A549 (cell line): ENCODE measurements at regions of chr20 and their contacts with region 1.

Region 1: GRCh38 chr20:63495741-63496595 is 2.9 kb downstream of the EEF1A2 start:
- DNase-seq: peak; percentile 58 to 73
- ATAC-seq: peak in 1 of 2 experiments; percentile 79; a peak in 3 of 6 replicates
- H3K4me3 ChIP-seq: no peak overlapping the region
- H3K27ac ChIP-seq: peak overlapping the region in 1 of 2 experiments; percentile 55; a peak in 3 of 6 replicates
- H3K4me1 ChIP-seq: peaks cover 27% of the 10 kb centered on the region
- CTCF ChIP-seq: peak; percentile 90
- EP300 ChIP-seq: no peak
- POLR2A ChIP-seq: no peak
- RAD21 ChIP-seq: peak; percentile 52 to 63

Region 2: DNA sequence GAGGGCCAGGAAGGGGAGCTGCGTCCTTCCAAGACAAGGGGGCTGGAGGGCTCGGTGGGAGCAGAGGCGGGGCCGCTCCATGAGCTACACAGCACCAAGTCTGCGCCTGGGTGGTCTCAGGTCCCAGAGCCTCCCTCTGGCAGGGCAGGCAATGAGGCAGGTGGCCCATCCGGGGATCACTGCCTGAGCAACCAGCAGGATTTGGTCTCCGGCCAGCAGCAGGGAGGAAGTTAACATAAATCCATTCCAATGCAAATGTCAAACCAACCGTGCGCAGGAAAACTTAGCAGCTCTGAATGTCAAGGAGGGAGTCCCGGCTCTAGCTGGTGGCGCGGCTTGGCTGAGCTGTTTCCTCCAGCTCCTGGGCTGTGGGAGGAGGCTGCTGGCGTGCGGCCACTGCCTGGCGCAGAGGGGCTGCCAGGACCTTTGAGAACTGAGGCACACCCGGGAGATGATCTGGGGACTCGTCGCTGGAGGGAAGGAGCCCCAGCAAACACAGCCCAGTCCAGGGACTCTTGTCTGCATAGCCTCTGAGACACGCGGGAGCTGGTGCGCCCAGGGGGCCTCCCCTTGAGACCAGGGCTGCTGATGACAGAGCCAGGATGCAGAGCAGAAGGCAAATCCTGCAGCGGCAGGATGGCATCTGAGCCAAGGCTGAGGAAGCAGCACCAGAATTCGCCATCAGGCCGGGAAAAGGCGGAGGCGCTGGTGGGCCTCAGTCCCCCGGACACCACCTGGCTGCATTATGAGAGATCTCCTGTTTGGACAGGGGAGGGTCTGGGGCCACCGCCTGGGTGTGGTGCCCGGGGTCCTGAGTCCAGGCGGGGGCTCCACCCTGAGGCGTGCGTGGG is 101.7 kb before region 1 on chr20:
- CTCF ChIA-PET with region 1: no interaction called
- POLR2A ChIA-PET with region 1: no interaction called
- DNase-seq: no peak
- ATAC-seq: no peak
- H3K4me3 ChIP-seq: no peak overlapping the region
- H3K27ac ChIP-seq: no peak overlapping the region
- H3K4me1 ChIP-seq: no peaks in the 10 kb centered on the region
- CTCF ChIP-seq: no peak
- EP300 ChIP-seq: no peak
- POLR2A ChIP-seq: no peak
- RAD21 ChIP-seq: no peak

Region 3: DNA sequence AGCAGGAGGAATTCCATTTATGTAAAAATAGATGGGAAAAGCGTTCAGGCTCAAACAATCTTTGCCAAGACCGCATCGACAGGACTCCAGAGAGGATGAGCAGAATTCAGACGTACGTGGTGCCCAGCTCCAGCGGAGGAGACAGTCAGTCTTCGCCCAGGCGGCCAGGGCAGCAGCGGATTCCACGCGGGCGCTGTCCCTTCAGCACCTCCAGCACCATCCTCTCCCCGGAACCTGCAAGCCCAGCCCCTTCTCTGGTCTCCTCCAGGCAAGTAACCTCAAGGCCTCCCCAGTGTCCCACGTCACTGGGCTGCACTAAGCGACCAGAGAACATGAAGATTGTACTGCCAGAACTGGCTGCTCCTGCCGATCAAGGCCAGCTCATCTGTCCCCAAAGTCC is 20.8 kb before region 1 on chr20:
- CTCF ChIA-PET with region 1: interaction called, 40 read pairs
- POLR2A ChIA-PET with region 1: no interaction called
- DNase-seq: peak in 1 of 2 experiments; percentile 52
- ATAC-seq: peak; percentile 51 to 61; a peak in 5 of 6 replicates
- H3K4me3 ChIP-seq: no peak overlapping the region
- H3K27ac ChIP-seq: no peak overlapping the region
- H3K4me1 ChIP-seq: peaks cover 13% of the 10 kb centered on the region
- CTCF ChIP-seq: no peak
- EP300 ChIP-seq: no peak
- POLR2A ChIP-seq: no peak
- RAD21 ChIP-seq: no peak

Region 4: GRCh38 chr20:63482856-63483695 is 12.9 kb before region 1 on chr20:
- CTCF ChIA-PET with region 1: interaction called, 40 read pairs
- POLR2A ChIA-PET with region 1: no interaction called
- DNase-seq: peak; percentile 53 to 64
- ATAC-seq: peak; percentile 17 to 57
- H3K4me3 ChIP-seq: no peak overlapping the region
- H3K27ac ChIP-seq: peak overlapping the region in 1 of 2 experiments; percentile 37; a peak in 1 of 6 replicates
- H3K4me1 ChIP-seq: peaks cover 16% of the 10 kb centered on the region; the same call in 2 of the 3 replicates
- CTCF ChIP-seq: no peak
- EP300 ChIP-seq: no peak
- POLR2A ChIP-seq: no peak
- RAD21 ChIP-seq: no peak

Region 5: DNA sequence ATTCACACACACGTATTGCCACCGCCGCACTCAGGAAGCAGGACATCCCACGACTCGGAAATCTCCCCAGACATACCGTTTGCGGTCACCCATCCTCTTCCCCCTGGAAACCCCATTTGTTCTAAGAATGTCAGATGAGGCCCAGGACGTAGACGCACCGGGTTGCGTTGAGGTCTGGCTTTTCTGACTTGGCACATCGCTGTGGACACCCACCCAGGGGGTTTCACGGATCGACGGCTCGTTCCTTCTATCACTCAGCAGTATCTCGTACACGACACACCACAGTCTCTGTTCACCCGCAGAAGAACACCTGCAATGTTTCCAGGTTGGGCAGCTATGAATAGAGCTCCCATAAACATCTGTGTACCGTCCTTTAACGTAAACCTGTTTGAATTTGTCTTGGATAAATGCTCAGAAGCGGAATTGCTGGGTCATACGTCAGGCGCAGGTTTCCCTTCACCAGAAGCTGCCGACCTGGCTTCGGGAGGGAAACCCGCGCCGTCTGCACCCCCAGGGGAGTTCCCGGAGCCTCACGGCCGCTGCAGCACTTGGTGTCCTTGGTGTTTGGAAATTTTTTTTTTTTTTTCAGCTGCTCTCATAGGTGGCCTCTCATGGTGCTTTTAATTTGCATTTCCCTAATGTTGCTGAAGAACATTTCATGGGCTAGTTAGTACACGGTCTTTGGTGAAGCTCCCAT is 12.3 kb after region 1 on chr20:
- CTCF ChIA-PET with region 1: interaction called, 20 read pairs
- POLR2A ChIA-PET with region 1: no interaction called
- DNase-seq: no peak
- ATAC-seq: no peak
- H3K4me3 ChIP-seq: no peak overlapping the region
- H3K27ac ChIP-seq: no peak overlapping the region
- H3K4me1 ChIP-seq: no peaks in the 10 kb centered on the region
- CTCF ChIP-seq: no peak
- EP300 ChIP-seq: no peak
- POLR2A ChIP-seq: no peak
- RAD21 ChIP-seq: no peak

Region 6: DNA sequence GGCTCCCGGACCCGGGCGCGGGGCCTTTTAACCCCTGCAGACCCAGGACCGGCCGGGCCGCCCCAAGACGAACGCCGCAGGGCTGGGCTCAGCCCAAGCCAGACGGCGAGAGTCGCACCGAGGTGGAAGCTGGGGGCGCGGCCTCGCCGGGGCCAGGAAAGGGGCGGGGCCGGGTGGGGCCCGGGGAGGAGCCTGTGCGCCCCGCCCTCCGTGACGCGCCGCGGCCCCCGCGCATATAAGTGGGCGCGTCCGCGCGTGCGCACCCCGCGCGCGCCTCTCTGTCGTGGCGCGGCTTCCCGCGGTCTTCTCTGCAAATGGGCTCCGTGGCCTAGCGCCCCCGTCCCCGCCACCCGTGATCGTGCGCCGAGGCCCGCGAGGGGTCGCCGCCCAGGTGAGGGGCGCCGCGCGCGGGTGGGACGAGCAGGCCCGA is 24.6 kb after region 1 on chr20 and contains the start of gene PPDPF:
- CTCF ChIA-PET with region 1: interaction called, 75 read pairs
- POLR2A ChIA-PET with region 1: interaction called, 21 read pairs
- DNase-seq: peak; percentile 81 to 82
- ATAC-seq: peak; percentile 75 to 79
- H3K4me3 ChIP-seq: peak within 1 kb of the TSS; percentile 83
- H3K27ac ChIP-seq: peak within 1 kb of the TSS; percentile 88 to 95
- H3K4me1 ChIP-seq: peaks cover 10% of the 10 kb centered on the region; the same call in 2 of the 3 replicates
- CTCF ChIP-seq: no peak
- EP300 ChIP-seq: no peak
- POLR2A ChIP-seq: peak; percentile 87
- RAD21 ChIP-seq: no peak
- polyA plus RNA-seq, gene PPDPF: 4.6 and 7.7 TPM in 2 replicates

Region 7: GRCh38 chr20:63734111-63734945 is 238.4 kb after region 1 on chr20:
- CTCF ChIA-PET with region 1: no interaction called
- POLR2A ChIA-PET with region 1: no interaction called
- DNase-seq: no peak
- ATAC-seq: no peak
- H3K4me3 ChIP-seq: no peak overlapping the region
- H3K27ac ChIP-seq: no peak overlapping the region
- H3K4me1 ChIP-seq: peaks cover 5% of the 10 kb centered on the region
- CTCF ChIP-seq: no peak
- EP300 ChIP-seq: no peak
- POLR2A ChIP-seq: no peak
- RAD21 ChIP-seq: no peak